K562 (cell line): ENCODE measurements at regions of chr11 and their contacts with region 1.

Region 1: GRCh38 chr11:5151713-5152153 is 2.8 kb downstream of the OR52A1 start:
- DNase-seq: peak; percentile 37 to 86 (median 64)
- ATAC-seq: peak; percentile 85
- H3K4me3 ChIP-seq: no peak overlapping the region
- H3K27ac ChIP-seq: peak overlapping the region; percentile 53
- H3K4me1 ChIP-seq: peaks cover 21 to 41% of the 10 kb centered on the region in 2 experiments; a peak in 3 of 5 replicates
- H3K27me3 ChIP-seq: no peaks in the 10 kb centered on the region
- CTCF ChIP-seq: no peak
- EP300 ChIP-seq: peak; percentile 96
- POLR2A ChIP-seq: no peak
- RAD21 ChIP-seq: no peak

Region 2: DNA sequence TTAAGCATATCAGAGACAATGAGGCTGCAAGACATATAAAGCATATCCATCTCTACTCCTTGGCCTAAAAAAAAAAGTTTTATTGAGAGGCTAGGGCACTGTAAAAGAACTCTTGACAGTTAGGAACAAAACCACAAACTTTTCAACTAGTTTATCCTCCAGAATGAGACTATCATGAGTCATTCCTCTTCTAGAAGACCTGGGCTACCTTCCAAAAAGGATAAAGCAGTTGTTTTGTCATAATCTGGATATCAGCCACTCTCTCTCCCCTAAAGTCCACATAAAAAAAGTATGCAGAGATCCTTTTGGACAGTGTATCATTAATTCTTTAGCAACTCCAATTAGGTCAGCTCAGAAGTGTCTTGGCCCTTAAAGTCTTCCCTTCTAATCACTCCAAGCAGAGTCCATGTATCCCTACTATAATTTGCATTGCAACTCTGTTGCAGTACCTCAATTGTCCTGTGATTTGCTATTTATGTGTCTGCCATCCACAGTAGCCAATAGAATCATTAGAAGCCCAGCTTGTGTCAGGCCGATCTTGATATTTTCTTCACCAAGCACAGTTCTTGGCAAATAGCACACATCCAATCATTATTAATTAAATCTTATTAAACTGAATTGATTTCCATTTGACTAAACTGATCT is 259.6 kb before region 1 on chr11:
- CTCF ChIA-PET with region 1: no interaction called
- POLR2A ChIA-PET with region 1: no interaction called
- in situ Hi-C with region 1: no loop called
- intact Hi-C with region 1: no loop called
- DNase-seq: peak; percentile 22 to 49 (median 30)
- ATAC-seq: peak; percentile 72
- H3K4me3 ChIP-seq: no peak overlapping the region
- H3K27ac ChIP-seq: peak overlapping the region; percentile 32; the same call in 1 of the 3 replicates
- H3K4me1 ChIP-seq: peaks cover 0 to 22% of the 10 kb centered on the region in 2 experiments; a peak in 3 of 5 replicates
- H3K27me3 ChIP-seq: no peaks in the 10 kb centered on the region
- CTCF ChIP-seq: peak in 1 of 3 experiments; percentile 13; a peak in 1 of 6 replicates
- EP300 ChIP-seq: 0 out of 2 replicates have a peak, but pooled peaks have one; percentile 22
- POLR2A ChIP-seq: no peak
- RAD21 ChIP-seq: no peak

Region 3: DNA sequence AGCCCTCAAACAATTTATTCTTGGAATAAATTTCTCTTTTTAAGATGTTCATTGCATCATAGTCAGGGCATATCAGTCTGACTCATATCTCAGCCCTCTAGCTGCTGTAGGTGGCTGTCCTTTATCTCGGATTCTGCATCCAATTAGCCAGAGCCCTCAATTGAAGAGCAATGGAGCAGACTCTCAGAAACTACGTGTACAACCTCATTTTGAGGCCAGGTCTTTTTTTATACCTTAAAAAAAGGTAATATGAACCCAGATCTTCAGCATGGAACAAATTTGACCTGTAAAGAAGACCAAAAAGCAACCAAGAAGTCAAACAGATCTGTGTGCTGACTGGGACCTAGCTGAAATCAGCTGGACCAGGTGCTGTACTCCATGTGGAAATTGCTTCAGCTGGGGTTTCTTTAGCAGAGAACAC is 22.3 kb before region 1 on chr11:
- CTCF ChIA-PET with region 1: no interaction called
- POLR2A ChIA-PET with region 1: interaction called, 3 read pairs
- in situ Hi-C with region 1: no loop called
- intact Hi-C with region 1: loop called (anchors 2 kb)
- DNase-seq: peak; percentile 30 to 83 (median 50)
- ATAC-seq: peak; percentile 90
- H3K4me3 ChIP-seq: peak overlapping the region; percentile 5; the same call in 1 of the 2 replicates
- H3K27ac ChIP-seq: peak overlapping the region; percentile 77
- H3K4me1 ChIP-seq: peaks cover 5 to 16% of the 10 kb centered on the region in 2 experiments; a peak in 3 of 5 replicates
- H3K27me3 ChIP-seq: no peaks in the 10 kb centered on the region
- CTCF ChIP-seq: peak in 1 of 3 experiments; percentile 10; a peak in 1 of 6 replicates
- EP300 ChIP-seq: peak; percentile 88
- POLR2A ChIP-seq: peak; percentile 55; the same call in 1 of the 2 replicates
- RAD21 ChIP-seq: no peak

Region 4: GRCh38 chr11:5285703-5286340 is 134.1 kb after region 1 on chr11:
- CTCF ChIA-PET with region 1: no interaction called
- POLR2A ChIA-PET with region 1: no interaction called
- in situ Hi-C with region 1: no loop called
- intact Hi-C with region 1: no loop called
- DNase-seq: no peak
- ATAC-seq: no peak
- H3K4me3 ChIP-seq: no peak overlapping the region
- H3K27ac ChIP-seq: peak overlapping the region; percentile 77
- H3K4me1 ChIP-seq: peaks cover 21 to 86% of the 10 kb centered on the region in 2 experiments; a peak in 4 of 5 replicates
- H3K27me3 ChIP-seq: no peaks in the 10 kb centered on the region
- CTCF ChIP-seq: no peak
- EP300 ChIP-seq: no peak
- POLR2A ChIP-seq: no peak
- RAD21 ChIP-seq: no peak